RWPE1 (cell line): ENCODE measurements at regions of chr19 and their contacts with region 1.

Region 1: GRCh38 chr19:15251749-15252397 is 19.6 kb upstream of the EPHX3 start:
- DNase-seq: peak; percentile 78
- H3K27ac ChIP-seq: peak overlapping the region; percentile 97
- CTCF ChIP-seq: no peak; the same call in 1 of the 2 replicates

Region 2: DNA sequence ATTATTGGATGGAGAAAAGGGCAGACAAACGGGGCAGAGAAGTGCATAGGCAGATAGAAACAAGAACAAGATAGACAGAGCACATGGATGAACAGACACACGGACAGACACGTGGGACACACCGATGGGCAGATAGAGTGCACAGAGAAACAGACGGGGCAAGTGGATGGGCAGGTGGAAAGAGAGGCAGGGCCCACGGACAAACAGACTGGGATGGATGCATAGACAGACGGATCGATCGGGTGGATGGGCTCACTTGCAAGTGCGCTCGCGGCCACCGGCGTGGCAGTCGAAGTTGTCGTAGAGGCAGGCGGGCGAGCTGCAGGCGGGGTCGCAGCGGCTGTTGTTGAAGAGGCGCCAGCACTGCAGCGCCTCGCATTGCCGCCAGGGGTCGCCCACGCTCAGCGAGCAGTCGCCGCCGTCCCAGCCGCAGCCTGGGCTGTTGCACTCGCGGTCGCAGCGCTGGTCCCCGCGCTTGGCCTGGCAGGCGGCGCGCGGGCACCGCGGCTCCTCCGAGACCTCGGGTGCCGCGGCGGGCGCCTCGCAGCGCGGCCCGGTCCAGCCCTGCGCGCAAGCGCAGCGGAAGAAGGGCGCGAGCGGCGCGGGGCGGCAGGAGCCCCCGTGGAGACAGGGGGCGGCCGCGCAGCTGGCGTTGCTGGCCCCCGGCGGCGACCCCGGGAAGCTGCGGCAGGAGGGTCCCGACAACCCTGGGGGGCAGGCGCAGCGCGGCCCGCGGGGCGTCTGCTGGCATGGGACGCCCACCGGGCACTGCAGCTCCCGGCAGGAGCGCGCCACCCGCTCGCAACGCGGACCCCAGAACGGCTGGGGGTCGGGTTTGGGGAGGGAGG is 74.4 kb before region 1 on chr19:
- CTCF ChIA-PET with region 1: interaction called, 10 read pairs
- POLR2A ChIA-PET with region 1: no interaction called
- DNase-seq: peak; percentile 71
- H3K27ac ChIP-seq: peak overlapping the region; percentile 31; the same call in 1 of the 2 replicates
- CTCF ChIP-seq: peak; percentile 99

Region 3: GRCh38 chr19:15195371-15196334 is 56.2 kb before region 1 on chr19:
- CTCF ChIA-PET with region 1: interaction called, 19 read pairs
- POLR2A ChIA-PET with region 1: no interaction called
- DNase-seq: peak; percentile 89
- H3K27ac ChIP-seq: peak overlapping the region; percentile 54
- CTCF ChIP-seq: no peak; the same call in 1 of the 2 replicates

Region 4: DNA sequence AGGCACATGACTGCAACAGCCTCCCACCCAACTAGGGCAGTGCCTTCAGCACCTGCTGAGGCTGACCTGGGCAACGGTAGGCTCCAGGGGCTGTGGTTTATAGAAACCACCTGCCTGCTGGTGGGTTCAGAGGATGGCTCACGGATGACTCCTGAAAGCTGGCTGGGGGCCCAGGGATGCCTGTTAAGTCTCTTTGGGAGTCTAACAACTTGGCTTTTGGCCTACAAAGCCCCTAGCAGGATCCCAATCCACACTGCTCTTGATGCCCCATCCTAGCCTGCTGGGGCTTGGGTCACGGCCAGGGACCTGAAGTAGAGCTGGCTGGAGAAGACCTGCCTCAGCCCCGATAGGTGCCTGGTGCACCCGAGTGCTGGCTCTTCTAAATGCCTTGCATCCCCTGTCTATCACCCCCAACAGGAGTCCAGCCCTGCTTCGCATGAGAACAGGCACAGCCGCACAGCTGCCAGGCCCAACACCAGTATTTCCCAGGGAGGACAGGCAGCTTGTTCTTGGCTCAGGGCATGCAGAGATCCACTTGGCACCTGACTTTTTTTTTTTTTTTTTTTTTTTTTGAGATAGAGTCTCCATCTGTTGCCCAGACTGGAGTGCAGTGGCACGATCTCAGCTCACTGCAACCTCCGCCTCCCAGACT is 10.5 kb before region 1 on chr19:
- CTCF ChIA-PET with region 1: no interaction called
- POLR2A ChIA-PET with region 1: no interaction called
- DNase-seq: no peak
- H3K27ac ChIP-seq: peak overlapping the region; percentile 44
- CTCF ChIP-seq: no peak